ENCODE measurements at regions of chr9 and their contacts with region 1.

Region 1: DNA sequence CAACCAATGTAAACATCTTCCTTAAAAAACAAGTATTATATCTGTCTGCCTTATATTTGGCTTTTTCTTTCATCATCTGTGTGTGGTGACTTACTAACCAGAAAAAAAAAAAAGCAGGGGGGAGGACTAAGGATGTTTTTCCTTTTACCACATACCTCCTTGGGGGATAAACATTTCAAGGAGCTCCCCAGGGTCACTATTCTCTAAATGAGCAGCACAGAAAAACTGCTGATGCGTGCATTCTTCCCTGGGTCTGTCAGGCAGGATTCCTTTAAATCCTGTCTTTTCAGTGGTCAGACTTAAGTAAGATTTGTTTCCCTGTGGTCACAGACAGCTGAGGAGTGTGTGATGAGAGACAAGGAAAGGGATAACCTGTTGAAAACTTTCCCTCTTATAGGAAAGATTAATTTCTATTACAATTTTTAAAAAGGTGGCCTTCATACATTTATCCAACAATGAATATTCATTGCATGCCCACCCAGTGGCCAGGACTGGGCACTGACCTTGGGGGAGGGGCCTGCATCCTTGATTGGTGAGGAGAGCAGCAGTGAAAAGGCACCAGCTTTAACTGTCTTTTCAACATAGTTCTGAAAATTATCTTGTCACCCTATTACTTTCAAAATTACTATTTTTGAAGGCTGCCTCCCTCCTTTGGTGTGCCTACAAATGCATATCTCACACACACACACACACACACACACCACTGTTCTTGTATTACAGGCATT is 123.1 kb downstream of the TLE4 start:
- DNase-seq: no peak
- H3K4me3 ChIP-seq: no peak overlapping the region
- H3K27ac ChIP-seq: no peak overlapping the region
- H3K4me1 ChIP-seq: no peaks in the 10 kb centered on the region
- H3K27me3 ChIP-seq: no peaks in the 10 kb centered on the region
- CTCF ChIP-seq: no peak
- EP300 ChIP-seq: no peak
- POLR2A ChIP-seq: no peak

Region 2: DNA sequence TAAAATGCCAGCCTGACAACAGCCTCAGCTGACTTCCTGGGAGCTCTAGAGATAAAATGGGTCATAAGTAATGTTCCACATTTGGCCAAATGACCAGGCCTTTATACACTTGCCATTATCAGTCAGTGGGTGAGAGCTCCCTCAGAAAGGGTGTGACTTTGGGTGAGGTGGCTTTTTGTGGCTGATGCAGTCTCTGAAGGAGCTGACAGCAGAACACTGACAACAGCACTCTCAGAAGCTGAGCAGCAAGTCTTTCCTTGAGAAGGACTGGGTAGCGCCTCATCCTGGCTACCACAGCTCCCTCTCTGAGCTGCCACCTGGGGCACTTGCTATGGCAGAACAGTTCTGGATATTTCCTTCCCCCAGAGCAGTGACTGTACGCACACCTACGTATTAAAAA is 1641.2 kb before region 1 on chr9:
- in situ Hi-C with region 1: no loop called
- intact Hi-C with region 1: loop called (anchors 5 kb)
- DNase-seq: no peak
- H3K4me3 ChIP-seq: no peak overlapping the region
- H3K27ac ChIP-seq: no peak overlapping the region
- H3K4me1 ChIP-seq: no peaks in the 10 kb centered on the region
- H3K27me3 ChIP-seq: no peaks in the 10 kb centered on the region
- CTCF ChIP-seq: no peak
- EP300 ChIP-seq: no peak
- POLR2A ChIP-seq: no peak

Measured in transverse colon (tissue), 4 donors.